CD4-positive, alpha-beta memory T cell (primary cell): ENCODE measurements at regions of chr6 and their contacts with region 1.

Region 1: GRCh38 chr6:145734486-145735355 is 599 bp downstream of the EPM2A start:
- DNase-seq: peak; percentile 58 to 67 (median 63)
- H3K4me3 ChIP-seq: peak overlapping the region; percentile 32 to 73
- H3K4me3 Mint-ChIP-seq: peak overlapping the region; percentile 93 to 98 (median 96)
- H3K27ac ChIP-seq: peak overlapping the region; percentile 79
- H3K27ac Mint-ChIP-seq: peak overlapping the region; percentile 90 to 98 (median 95)
- H3K4me1 ChIP-seq: peaks cover 16% of the 10 kb centered on the region
- H3K4me1 Mint-ChIP-seq: peaks cover 0 to 11% (median 4%) of the 10 kb centered on the region in 4 donors
- H3K27me3 ChIP-seq: no peaks in the 10 kb centered on the region
- H3K27me3 Mint-ChIP-seq: no peaks in the 10 kb centered on the region

Region 2: GRCh38 chr6:145814501-145815308 is 80.0 kb after region 1 on chr6 and contains the start of gene FBXO30:
- CTCF ChIA-PET with region 1: interaction called, 3 read pairs
- POLR2A ChIA-PET with region 1: interaction called, 49 read pairs
- intact Hi-C with region 1: loop called (anchors 1 kb)
- DNase-seq: peak; percentile 85 to 92 (median 88)
- H3K4me3 ChIP-seq: peak within 1 kb of the TSS; percentile 74 to 79
- H3K4me3 Mint-ChIP-seq: peak within 1 kb of the TSS; percentile 93 to 98 (median 95)
- H3K27ac ChIP-seq: peak within 1 kb of the TSS; percentile 86
- H3K27ac Mint-ChIP-seq: peak within 1 kb of the TSS; percentile 96 to 97 (median 96)
- H3K4me1 ChIP-seq: peaks cover 51% of the 10 kb centered on the region
- H3K4me1 Mint-ChIP-seq: peaks cover 26 to 60% (median 30%) of the 10 kb centered on the region in 4 donors
- H3K27me3 ChIP-seq: no peaks in the 10 kb centered on the region
- H3K27me3 Mint-ChIP-seq: no peaks in the 10 kb centered on the region
- total RNA-seq, gene FBXO30: 7.5 to 8.0 TPM

Region 3: DNA sequence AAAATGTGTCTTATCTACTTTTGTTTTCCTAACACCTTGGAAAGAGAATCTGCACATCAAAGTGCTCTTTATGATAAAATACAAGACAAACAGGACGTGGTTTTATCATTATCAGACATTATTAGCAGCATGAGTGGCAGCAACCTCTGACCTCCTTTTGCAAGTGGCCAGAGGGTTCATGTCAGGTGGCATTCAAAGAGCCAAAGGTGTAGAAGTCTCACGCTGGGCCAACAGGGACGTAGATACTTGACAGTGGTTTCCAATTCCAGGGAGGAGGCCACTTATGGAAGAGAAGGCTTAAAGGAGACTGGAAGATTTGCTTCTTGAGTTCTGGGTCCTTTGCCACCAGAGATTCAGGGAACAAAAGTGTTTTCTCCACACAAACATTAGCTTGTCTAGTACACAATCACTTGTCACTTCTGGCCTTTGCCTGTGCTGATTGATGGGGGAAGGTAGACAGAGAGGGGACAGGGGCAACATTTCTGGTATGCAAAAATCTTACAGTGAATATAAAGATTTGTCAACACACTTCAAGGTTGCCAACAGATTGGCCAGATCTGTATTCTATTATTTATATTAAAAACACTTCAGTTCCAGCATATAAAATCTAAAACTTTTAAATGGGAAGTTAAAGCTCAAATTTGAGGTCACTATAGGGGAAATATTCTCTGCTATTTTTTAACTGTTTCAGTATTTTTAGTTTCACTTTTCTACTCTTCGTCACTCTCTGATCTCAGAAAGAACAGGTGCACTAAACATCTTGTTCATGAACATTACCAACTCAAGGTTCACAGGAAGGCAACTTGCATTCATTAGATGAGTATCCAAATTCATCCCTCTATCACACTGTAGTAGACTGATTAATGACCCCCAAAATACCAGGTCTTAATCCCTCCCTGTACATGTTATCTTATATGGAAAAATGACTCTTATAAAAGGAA is 132.0 kb after region 1 on chr6:
- CTCF ChIA-PET with region 1: no interaction called
- POLR2A ChIA-PET with region 1: interaction called, 8 read pairs
- intact Hi-C with region 1: loop called (anchors 5 kb)
- DNase-seq: peak in 2 of 5 donors; percentile 19 to 30
- H3K4me3 ChIP-seq: no peak overlapping the region
- H3K4me3 Mint-ChIP-seq: peak overlapping the region; percentile 53 to 84 (median 72)
- H3K27ac ChIP-seq: peak overlapping the region; percentile 42
- H3K27ac Mint-ChIP-seq: peak overlapping the region; percentile 70 to 93 (median 88)
- H3K4me1 ChIP-seq: peaks cover 38% of the 10 kb centered on the region
- H3K4me1 Mint-ChIP-seq: peaks cover 31 to 44% (median 35%) of the 10 kb centered on the region in 4 donors
- H3K27me3 ChIP-seq: no peaks in the 10 kb centered on the region
- H3K27me3 Mint-ChIP-seq: no peaks in the 10 kb centered on the region

Region 4: GRCh38 chr6:145887969-145888368 is 153.2 kb after region 1 on chr6:
- CTCF ChIA-PET with region 1: interaction called, 7 read pairs
- POLR2A ChIA-PET with region 1: interaction called, 3 read pairs
- intact Hi-C with region 1: loop called (anchors 5 kb)
- DNase-seq: peak in 2 of 5 donors; percentile 9 to 17
- H3K4me3 ChIP-seq: no peak overlapping the region
- H3K4me3 Mint-ChIP-seq: no peak overlapping the region
- H3K27ac ChIP-seq: no peak overlapping the region
- H3K27ac Mint-ChIP-seq: no peak overlapping the region
- H3K4me1 ChIP-seq: no peaks in the 10 kb centered on the region
- H3K4me1 Mint-ChIP-seq: no peaks in the 10 kb centered on the region
- H3K27me3 ChIP-seq: no peaks in the 10 kb centered on the region
- H3K27me3 Mint-ChIP-seq: no peaks in the 10 kb centered on the region

Region 5: DNA sequence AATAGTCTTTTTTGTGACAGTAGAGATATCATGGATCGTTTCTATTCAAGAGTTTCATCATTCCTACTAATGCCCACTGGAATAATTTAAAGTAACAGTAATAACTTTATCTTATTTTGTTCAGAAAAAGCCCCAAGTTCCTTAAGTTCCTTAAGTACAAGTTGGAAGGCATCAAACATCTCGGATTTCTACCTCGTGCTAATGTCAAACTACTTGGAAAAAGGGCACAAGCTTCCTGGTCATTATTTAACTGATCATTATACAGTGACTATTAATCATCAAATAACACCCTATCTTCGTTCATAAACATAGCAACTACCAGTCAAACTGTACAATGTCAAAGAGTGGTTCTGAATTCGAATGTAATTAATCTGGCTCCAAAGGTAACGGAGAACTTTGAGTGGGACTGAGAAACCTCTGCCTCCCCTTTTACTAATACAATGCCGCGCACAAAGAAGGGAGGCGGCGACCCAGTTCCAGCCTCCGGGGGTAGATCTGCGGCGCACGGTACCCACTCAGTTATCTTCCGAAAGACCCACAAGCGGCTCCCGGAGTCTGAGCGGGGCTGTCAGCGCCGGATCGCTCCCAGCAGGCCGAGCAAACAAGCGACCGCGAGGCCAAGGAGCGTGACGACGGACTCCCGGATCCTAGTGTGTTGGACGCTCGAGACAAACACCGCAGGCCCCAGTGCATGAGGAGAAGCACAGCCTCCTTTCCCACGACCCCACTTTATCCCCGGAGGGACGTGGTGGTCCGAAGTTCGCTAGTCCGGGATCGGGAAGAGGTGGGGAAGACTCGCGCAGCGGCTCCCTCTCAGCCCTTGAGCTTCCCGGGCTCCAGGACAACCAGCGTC is 228.7 kb after region 1 on chr6:
- CTCF ChIA-PET with region 1: interaction called, 3 read pairs
- POLR2A ChIA-PET with region 1: interaction called, 12 read pairs
- intact Hi-C with region 1: loop called (anchors 1 kb)
- DNase-seq: peak in 3 of 5 donors; percentile 23 to 46 (median 38)
- H3K4me3 ChIP-seq: peak overlapping the region; percentile 76 to 95
- H3K4me3 Mint-ChIP-seq: peak overlapping the region; percentile 96 to 99 (median 98)
- H3K27ac ChIP-seq: peak overlapping the region; percentile 67
- H3K27ac Mint-ChIP-seq: peak overlapping the region; percentile 92 to 99 (median 99)
- H3K4me1 ChIP-seq: peaks cover 43% of the 10 kb centered on the region
- H3K4me1 Mint-ChIP-seq: peaks cover 30 to 67% (median 47%) of the 10 kb centered on the region in 4 donors
- H3K27me3 ChIP-seq: no peaks in the 10 kb centered on the region
- H3K27me3 Mint-ChIP-seq: no peaks in the 10 kb centered on the region

Region 6: GRCh38 chr6:146770965-146771735 is 1036.4 kb after region 1 on chr6:
- CTCF ChIA-PET with region 1: no interaction called
- POLR2A ChIA-PET with region 1: no interaction called
- intact Hi-C with region 1: loop called (anchors 10 kb)
- DNase-seq: peak; percentile 41 to 69 (median 63)
- H3K4me3 ChIP-seq: peak overlapping the region; percentile 3 to 20
- H3K4me3 Mint-ChIP-seq: peak overlapping the region; percentile 70 to 86 (median 78)
- H3K27ac ChIP-seq: no peak overlapping the region
- H3K27ac Mint-ChIP-seq: peak overlapping the region; percentile 14 to 88 (median 52)
- H3K4me1 ChIP-seq: peaks cover 27% of the 10 kb centered on the region
- H3K4me1 Mint-ChIP-seq: peaks cover 18 to 24% (median 21%) of the 10 kb centered on the region in 4 donors
- H3K27me3 ChIP-seq: no peaks in the 10 kb centered on the region
- H3K27me3 Mint-ChIP-seq: no peaks in the 10 kb centered on the region

Region 7: DNA sequence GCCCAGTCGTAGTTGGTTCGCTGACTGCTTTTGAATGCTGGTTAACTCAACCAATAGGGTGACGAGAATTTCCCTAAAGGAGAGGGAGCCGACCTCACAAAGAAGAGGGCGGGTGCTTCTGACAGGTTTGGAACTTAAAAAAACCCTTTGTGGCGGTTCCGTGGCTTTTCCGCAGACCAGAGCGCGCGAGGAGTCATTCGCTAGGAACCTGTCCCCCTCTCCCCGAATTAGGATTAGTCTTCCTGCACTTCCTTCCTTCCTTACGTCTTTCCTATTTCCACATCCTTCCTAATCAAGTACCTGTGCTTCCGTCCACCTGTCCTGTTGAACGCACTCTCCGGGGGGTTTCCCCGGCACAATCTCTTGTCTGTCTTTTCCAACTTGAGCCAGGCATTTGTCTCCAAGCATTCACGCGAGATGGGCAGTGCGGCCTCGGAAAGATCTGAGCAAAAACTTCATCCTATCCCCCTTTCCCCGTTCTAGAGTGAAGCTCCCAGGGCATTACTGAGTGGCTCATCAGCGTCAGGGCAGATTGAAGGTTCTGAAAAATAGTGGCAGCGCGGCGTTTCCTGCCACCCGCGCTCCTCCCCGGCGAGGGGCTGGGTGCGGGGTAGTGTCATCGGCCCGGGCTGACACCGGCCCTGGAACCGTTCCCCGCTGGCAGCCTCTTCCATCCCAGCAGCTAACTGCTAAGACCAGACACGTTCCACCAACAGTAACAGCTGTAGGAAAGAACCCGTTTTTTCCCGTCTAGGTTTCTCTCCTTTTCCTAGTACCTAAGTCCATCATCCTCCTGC is 1468.0 kb after region 1 on chr6:
- CTCF ChIA-PET with region 1: no interaction called
- POLR2A ChIA-PET with region 1: no interaction called
- intact Hi-C with region 1: loop called (anchors 2 kb)
- DNase-seq: peak; percentile 87 to 94 (median 91)
- H3K4me3 ChIP-seq: peak overlapping the region; percentile 66 to 98
- H3K4me3 Mint-ChIP-seq: peak overlapping the region; percentile 88 to 99 (median 96)
- H3K27ac ChIP-seq: peak overlapping the region; percentile 95
- H3K27ac Mint-ChIP-seq: peak overlapping the region; percentile 93 to 99 (median 98)
- H3K4me1 ChIP-seq: peaks cover 28% of the 10 kb centered on the region
- H3K4me1 Mint-ChIP-seq: peaks cover 16 to 46% (median 27%) of the 10 kb centered on the region in 4 donors
- H3K27me3 ChIP-seq: no peaks in the 10 kb centered on the region
- H3K27me3 Mint-ChIP-seq: no peaks in the 10 kb centered on the region